ENCODE measurements at regions of chr5 and their contacts with region 1.

Region 1: GRCh38 chr5:99032234-99033013 is 103.6 kb upstream of the CHD1 start:
- DNase-seq: peak; percentile 75
- H3K4me3 Mint-ChIP-seq: peak overlapping the region; percentile 72
- H3K27ac Mint-ChIP-seq: peak overlapping the region; percentile 84
- H3K4me1 Mint-ChIP-seq: peaks cover 72% of the 10 kb centered on the region
- H3K27me3 Mint-ChIP-seq: no peaks in the 10 kb centered on the region

Region 2: GRCh38 chr5:98839469-98840383 is 192.7 kb before region 1 on chr5:
- CTCF ChIA-PET with region 1: no interaction called
- intact Hi-C with region 1: loop called (anchors 5 kb)
- DNase-seq: peak; percentile 26
- H3K4me3 Mint-ChIP-seq: peak overlapping the region; percentile 46
- H3K27ac Mint-ChIP-seq: no peak overlapping the region
- H3K4me1 Mint-ChIP-seq: no peaks in the 10 kb centered on the region
- H3K27me3 Mint-ChIP-seq: peaks cover 2% of the 10 kb centered on the region

Region 3: GRCh38 chr5:98911280-98912040 is 121.0 kb before region 1 on chr5:
- CTCF ChIA-PET with region 1: interaction called, 10 read pairs
- intact Hi-C with region 1: loop called (anchors 1 kb)
- DNase-seq: no peak
- H3K4me3 Mint-ChIP-seq: no peak overlapping the region
- H3K27ac Mint-ChIP-seq: peak overlapping the region; percentile 19
- H3K4me1 Mint-ChIP-seq: peaks cover 63% of the 10 kb centered on the region
- H3K27me3 Mint-ChIP-seq: no peaks in the 10 kb centered on the region

Region 4: DNA sequence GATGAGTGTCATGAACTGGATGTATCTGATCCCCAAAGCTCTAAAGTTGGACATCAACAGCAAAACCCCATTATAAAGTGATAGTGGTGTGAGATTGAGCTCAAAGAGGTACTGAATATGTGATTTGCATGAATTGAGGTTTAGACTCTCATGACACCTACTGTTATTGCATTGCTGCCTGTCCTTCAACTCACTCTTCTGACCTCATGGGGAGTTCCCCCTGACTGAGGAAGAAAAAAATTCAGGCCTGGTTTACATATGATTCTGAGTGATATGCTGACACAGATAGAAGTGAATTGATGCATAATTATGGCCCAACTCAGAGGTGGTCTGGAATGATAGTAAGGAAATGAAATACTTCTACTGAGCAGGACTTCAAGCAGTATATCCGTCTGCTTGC is 27.5 kb before region 1 on chr5:
- CTCF ChIA-PET with region 1: interaction called, 5 read pairs
- intact Hi-C with region 1: loop called (anchors 1 kb)
- DNase-seq: peak; percentile 47
- H3K4me3 Mint-ChIP-seq: no peak overlapping the region
- H3K27ac Mint-ChIP-seq: no peak overlapping the region
- H3K4me1 Mint-ChIP-seq: peaks cover 17% of the 10 kb centered on the region
- H3K27me3 Mint-ChIP-seq: no peaks in the 10 kb centered on the region

Region 5: GRCh38 chr5:99721506-99721905 is 689.1 kb after region 1 on chr5:
- CTCF ChIA-PET with region 1: no interaction called
- intact Hi-C with region 1: no loop called
- DNase-seq: no peak
- H3K4me3 Mint-ChIP-seq: no peak overlapping the region
- H3K27ac Mint-ChIP-seq: no peak overlapping the region
- H3K4me1 Mint-ChIP-seq: no peaks in the 10 kb centered on the region
- H3K27me3 Mint-ChIP-seq: no peaks in the 10 kb centered on the region

Measured in activated naive CD4-positive, alpha-beta T cell treated with anti-CD3 and anti-CD28 coated beads for 36 hours (primary cell).